ENCODE measurements at regions of chr5 and their contacts with region 1.

Region 1: DNA sequence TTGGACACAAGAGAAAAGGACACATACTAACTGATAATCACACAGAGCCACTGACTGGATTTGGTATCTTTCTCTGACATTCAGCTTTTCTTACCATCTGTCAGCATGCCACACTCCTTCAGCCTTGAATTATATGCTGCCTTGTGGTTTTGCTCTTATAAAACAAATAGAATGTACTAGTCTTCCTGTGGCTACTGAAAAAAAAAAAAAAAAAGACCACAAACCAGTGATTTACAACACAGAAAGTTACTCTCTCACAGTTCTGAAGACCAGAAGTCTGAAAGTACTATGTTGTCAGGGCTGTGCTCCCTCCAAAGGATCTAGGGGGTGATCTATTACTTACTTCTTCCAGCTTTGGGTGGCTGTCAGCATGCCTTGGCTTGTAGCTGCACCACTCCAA is 82.3 kb downstream of the THBS4 start:
- DNase-seq: no peak
- CTCF ChIP-seq: no peak

Region 2: GRCh38 chr5:80275347-80275746 is 157.9 kb after region 1 on chr5:
- CTCF ChIA-PET with region 1: no interaction called
- POLR2A ChIA-PET with region 1: no interaction called
- DNase-seq: no peak
- CTCF ChIP-seq: peak; percentile 39

Region 3: GRCh38 chr5:80437326-80437725 is 319.9 kb after region 1 on chr5:
- CTCF ChIA-PET with region 1: no interaction called
- POLR2A ChIA-PET with region 1: interaction called, 12 read pairs
- DNase-seq: no peak
- CTCF ChIP-seq: no peak

Measured in GM10248 (cell line).